Aorta (tissue), 5 donors: ENCODE measurements at regions of chr3 and their contacts with region 1.

Region 1: DNA sequence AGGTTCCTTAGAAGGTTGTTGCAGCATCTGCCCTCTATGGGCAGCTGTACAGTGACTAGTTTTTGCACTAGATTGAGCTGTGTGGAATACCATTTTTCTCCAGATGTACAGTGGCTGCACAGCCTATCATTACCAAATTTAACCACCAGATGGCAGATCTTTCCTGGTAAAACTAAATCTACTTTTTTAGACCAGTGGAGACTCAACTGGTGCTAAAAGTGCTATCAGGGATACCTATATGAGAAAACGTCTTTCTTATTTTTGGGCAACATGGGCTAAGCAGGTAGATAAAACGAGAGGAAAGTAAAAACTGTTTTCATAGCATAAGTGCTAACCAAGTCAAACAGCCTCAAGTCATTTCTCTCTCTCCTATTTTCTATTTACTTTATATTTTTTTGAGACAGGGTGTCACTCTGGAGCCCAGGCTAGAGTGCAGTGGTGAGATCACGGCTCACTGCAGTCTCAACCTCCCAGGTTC is 21.2 kb downstream of the IGSF10 start:
- DNase-seq: no peak
- ATAC-seq: peak; percentile 82
- H3K4me3 ChIP-seq: no peak overlapping the region
- H3K27ac ChIP-seq: no peak overlapping the region
- H3K4me1 ChIP-seq: no peaks in the 10 kb centered on the region
- H3K27me3 ChIP-seq: no peaks in the 10 kb centered on the region

Region 2: DNA sequence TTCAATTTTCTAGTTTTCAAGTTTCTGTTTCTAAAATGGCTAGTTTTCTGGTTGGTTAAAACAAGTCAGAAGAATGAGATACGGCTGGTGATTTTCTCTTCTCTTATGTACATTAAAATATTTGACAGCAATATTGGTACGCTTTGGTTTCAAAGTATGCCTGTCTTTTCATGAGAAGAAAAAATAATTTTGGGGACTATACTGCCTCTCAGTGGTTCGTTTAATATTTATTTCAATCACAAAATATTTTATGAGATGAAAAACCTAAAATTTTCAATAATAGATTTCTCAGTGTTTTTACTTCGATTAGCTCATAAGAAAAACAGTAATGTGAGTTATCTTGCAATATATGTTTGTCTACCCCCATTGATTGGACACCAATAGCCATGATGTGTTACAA is 221.2 kb after region 1 on chr3:
- intact Hi-C with region 1: loop called (anchors 5 to 10 kb)
- DNase-seq: no peak
- ATAC-seq: no peak
- H3K4me3 ChIP-seq: no peak overlapping the region
- H3K27ac ChIP-seq: no peak overlapping the region
- H3K4me1 ChIP-seq: no peaks in the 10 kb centered on the region
- H3K27me3 ChIP-seq: no peaks in the 10 kb centered on the region

Region 3: DNA sequence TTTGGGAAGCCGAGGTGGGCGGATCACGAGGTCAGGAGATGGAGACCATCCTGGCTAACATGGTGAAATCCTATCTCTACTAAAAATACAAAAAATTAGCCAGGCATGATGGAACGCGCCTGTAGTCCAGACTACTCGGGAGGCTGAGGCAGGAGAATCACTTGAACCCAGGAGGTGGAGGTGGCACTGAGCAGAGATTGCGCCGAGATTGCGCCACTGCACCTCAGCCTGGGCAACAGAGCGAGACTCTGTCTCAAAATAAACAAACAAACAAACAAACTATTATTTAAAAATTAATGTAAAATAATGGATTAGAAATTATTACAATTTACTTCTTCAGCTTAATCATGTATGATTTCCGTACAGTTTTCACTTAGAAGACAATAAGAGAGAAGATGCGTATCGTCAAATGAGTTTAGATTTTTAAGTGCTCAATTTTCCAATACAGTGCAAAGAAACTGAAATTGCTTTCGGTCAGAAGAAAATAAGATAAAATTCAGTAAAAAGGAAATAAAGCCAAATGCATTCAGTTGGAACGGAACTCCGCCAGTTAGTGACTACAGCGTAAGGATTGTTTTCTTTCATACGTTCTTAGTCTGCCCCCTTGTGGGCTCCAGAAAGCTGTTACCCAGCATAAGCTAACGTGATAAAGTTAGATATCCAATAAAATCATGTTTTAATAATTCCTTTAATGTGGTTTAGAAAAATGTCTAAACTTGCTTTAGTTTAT is 399.1 kb after region 1 on chr3:
- intact Hi-C with region 1: loop called (anchors 2 kb)
- DNase-seq: no peak
- ATAC-seq: peak; percentile 88
- H3K4me3 ChIP-seq: no peak overlapping the region
- H3K27ac ChIP-seq: no peak overlapping the region
- H3K4me1 ChIP-seq: peaks cover 0 to 2% of the 10 kb centered on the region in 2 donors
- H3K27me3 ChIP-seq: no peaks in the 10 kb centered on the region

Region 4: DNA sequence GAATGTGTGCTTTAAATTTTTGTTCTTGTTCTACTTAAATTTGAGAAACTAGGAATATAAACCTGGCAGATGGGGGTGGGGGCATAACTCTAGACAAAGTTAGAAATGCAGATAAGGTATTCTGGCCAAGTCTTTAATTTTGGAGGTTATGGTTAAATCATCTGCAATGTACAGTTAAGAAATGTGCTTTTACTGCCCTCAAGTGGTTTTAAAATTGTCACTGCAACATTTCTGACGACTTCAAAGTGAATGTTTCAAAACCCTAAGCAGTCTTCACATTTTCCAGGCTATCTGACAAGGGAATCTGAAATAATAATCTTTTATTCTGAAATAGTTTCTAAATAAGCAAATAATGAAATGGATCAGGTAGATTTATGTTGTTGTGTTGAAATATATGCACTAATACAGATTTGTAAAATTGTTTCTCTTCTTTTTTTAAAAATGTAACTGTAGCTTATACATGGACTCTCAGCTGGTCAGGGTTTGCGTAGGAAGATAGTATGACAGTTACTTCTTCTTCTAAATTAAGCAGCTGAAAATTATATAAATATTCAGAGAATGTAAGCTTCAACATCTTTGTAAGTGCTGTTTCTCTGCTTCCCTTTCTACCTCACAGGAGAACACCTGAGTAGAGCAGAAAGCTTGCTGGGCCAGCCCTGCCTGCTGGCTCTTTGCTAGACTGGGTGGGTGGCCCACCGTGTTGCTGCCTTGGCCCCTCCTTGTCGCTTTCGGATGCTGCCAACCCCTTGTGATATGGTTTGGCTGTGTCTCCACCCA is 478.8 kb after region 1 on chr3:
- intact Hi-C with region 1: loop called (anchors 5 kb)
- DNase-seq: no peak
- ATAC-seq: peak; percentile 77
- H3K4me3 ChIP-seq: no peak overlapping the region
- H3K27ac ChIP-seq: no peak overlapping the region
- H3K4me1 ChIP-seq: no peaks in the 10 kb centered on the region
- H3K27me3 ChIP-seq: no peaks in the 10 kb centered on the region